ENCODE measurements at regions of chr16 and their contacts with region 1.

Region 1: GRCh38 chr16:69260019-69260418 is 51.1 kb upstream of the VPS4A start:
- DNase-seq: no peak
- H3K4me3 ChIP-seq: no peak overlapping the region
- H3K27ac ChIP-seq: no peak overlapping the region
- H3K4me1 ChIP-seq: no peaks in the 10 kb centered on the region
- H3K27me3 ChIP-seq: no peaks in the 10 kb centered on the region
- CTCF ChIP-seq: no peak

Region 2: DNA sequence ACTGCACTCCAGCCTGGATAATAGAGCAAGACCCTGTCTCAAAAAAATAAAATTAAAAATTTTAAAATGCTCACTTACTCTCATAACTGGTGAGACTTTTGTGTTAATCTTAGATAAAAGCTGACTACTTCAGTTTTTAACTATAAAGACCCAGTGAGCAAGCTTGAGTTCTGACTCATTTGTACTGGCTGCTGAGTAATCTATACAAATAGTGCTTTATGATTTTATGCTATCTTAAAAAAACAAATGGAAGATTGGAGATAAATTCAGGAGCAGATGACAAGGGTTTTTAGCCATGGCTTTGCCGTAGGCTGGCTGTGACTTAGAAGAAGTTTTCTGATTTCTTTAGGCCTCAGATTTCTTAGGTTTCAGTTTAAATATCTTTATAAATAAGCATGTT is 42.6 kb before region 1 on chr16:
- intact Hi-C with region 1: loop called (anchors 10 kb)
- DNase-seq: no peak
- H3K4me3 ChIP-seq: no peak overlapping the region
- H3K27ac ChIP-seq: no peak overlapping the region
- H3K4me1 ChIP-seq: peaks cover 0 to 26% (median 5%) of the 10 kb centered on the region in 4 donors
- H3K27me3 ChIP-seq: no peaks in the 10 kb centered on the region
- CTCF ChIP-seq: no peak